OCI-LY7 (cell line): ENCODE measurements at regions of chr12 and their contacts with region 1.

Region 1: DNA sequence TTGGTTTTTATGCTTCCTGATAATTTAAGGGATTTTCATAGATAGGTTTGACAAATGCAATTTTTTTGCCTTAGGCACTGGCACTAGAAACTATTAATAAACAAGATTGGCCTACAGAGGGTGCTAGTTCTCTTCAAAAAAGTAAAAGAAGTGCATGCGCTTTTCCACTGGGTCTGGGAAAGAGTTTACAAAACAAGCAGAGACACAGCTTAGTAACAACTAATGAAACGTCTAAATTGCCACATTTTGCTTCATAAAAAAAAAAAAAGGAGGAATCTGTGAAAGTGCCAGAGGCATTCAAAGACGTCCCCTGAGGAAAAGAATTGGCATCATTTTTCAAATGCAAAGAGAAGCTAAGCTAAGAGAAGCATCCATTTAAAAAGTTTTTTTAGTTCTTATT is 58.3 kb upstream of the EEA1 start:
- DNase-seq: peak; percentile 79
- H3K4me3 ChIP-seq: peak overlapping the region; percentile 54
- H3K27ac ChIP-seq: peak overlapping the region; percentile 88
- H3K4me1 ChIP-seq: peaks cover 45% of the 10 kb centered on the region
- CTCF ChIP-seq: peak; percentile 92

Region 2: GRCh38 chr12:92784795-92785562 is 202.4 kb before region 1 on chr12:
- CTCF ChIA-PET with region 1: no interaction called
- POLR2A ChIA-PET with region 1: interaction called, 4 read pairs
- intact Hi-C with region 1: loop called (anchors 1 kb)
- DNase-seq: peak; percentile 79
- H3K4me3 ChIP-seq: no peak overlapping the region
- H3K27ac ChIP-seq: no peak overlapping the region
- H3K4me1 ChIP-seq: no peaks in the 10 kb centered on the region
- CTCF ChIP-seq: peak; percentile 84

Region 3: DNA sequence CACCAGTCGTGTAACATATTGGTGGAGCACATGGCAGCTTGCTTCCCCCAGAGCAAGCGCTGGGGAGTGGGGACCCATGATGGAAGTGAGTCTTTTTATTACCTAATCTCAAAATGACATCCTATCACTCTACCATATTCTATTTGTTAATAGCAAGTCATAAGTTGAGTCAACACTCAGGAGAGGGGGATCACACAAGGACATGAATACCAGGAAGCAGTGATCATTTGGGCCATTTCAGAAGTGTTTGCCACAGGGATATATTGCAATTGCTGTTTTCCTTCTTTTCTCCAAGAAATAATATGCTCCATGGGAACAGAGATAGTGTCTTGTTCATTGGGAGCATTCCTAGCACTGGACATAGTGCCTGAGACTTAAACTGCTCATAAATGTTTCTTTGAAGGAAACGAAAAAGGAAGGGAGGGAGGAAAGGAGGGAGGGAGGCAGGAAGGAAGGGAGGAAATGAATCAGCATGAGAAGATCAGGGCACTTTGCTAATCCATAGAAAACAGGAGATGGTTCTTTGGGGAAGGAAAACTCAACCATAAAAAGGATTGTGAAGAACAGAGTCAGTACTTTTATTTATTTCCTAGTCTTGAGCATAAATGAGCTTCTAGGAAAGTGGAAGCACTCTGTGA is 19.1 kb before region 1 on chr12:
- CTCF ChIA-PET with region 1: no interaction called
- POLR2A ChIA-PET with region 1: no interaction called
- intact Hi-C with region 1: no loop called
- DNase-seq: no peak
- H3K4me3 ChIP-seq: no peak overlapping the region
- H3K27ac ChIP-seq: no peak overlapping the region
- H3K4me1 ChIP-seq: no peaks in the 10 kb centered on the region
- CTCF ChIP-seq: no peak

Region 4: DNA sequence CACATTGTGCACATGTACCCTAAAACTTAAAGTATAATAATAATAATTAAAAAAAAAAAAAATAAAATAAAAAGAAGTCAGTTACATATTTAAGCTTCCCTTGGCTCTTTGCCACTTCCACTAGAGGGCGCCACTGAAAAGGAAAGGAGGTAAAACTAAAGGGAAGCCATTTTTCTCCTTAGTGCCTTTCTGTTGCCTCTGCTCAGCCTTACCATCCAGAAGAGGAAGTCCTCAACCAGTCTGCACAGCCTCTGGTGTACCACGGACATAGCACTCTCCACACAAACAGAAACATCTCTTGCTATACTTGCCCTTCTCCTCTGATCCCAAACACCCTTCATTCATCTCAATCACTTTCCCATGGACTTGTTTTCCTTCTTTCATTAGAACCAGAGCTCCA is 110.7 kb after region 1 on chr12:
- CTCF ChIA-PET with region 1: interaction called, 4 read pairs
- POLR2A ChIA-PET with region 1: interaction called, 15 read pairs
- intact Hi-C with region 1: loop called (anchors 1 kb)
- DNase-seq: peak; percentile 87
- H3K4me3 ChIP-seq: no peak overlapping the region
- H3K27ac ChIP-seq: no peak overlapping the region
- H3K4me1 ChIP-seq: peaks cover 7% of the 10 kb centered on the region
- CTCF ChIP-seq: peak; percentile 86

Region 5: GRCh38 chr12:93205361-93205760 is 218.0 kb after region 1 on chr12:
- CTCF ChIA-PET with region 1: no interaction called
- POLR2A ChIA-PET with region 1: no interaction called
- intact Hi-C with region 1: no loop called
- DNase-seq: no peak
- H3K4me3 ChIP-seq: no peak overlapping the region
- H3K27ac ChIP-seq: no peak overlapping the region
- H3K4me1 ChIP-seq: no peaks in the 10 kb centered on the region
- CTCF ChIP-seq: no peak

Region 6: GRCh38 chr12:93378373-93379325 is 391.3 kb after region 1 on chr12:
- CTCF ChIA-PET with region 1: no interaction called
- POLR2A ChIA-PET with region 1: interaction called, 24 read pairs
- intact Hi-C with region 1: loop called (anchors 1 kb)
- DNase-seq: peak; percentile 80
- H3K4me3 ChIP-seq: peak overlapping the region; percentile 75
- H3K27ac ChIP-seq: peak overlapping the region; percentile 71
- H3K4me1 ChIP-seq: peaks cover 23% of the 10 kb centered on the region
- CTCF ChIP-seq: no peak

Region 7: DNA sequence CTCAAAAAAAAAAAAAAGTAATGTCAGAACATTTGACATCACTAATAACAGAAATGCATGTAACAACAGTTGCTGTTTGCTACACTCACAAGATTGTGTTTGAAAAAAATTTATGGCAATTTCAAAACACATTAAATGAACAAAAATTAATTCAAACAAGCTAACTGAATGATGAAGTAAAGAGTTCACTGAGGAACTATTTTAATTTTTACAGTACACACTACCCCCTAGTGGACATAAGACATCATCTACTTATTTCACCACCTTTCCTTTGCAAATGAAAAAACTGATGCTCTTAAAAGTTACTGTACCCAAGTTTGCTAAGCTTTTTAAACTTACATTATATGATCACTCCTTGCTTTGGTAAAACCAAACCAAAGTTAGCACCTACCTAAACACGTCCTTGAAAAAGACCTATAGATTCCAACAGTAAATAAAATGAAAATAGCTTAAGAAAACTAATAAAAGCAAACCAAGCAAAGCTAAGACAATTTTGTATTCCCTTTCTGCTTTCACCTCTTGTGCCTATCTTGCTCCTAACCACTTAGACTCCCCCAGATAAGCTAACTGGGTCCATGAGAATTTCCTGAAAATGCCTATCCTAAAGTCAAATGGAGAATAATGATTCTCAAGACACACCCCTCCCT is 432.1 kb after region 1 on chr12:
- CTCF ChIA-PET with region 1: no interaction called
- POLR2A ChIA-PET with region 1: interaction called, 5 read pairs
- intact Hi-C with region 1: loop called (anchors 1 kb)
- DNase-seq: peak; percentile 70
- H3K4me3 ChIP-seq: no peak overlapping the region
- H3K27ac ChIP-seq: no peak overlapping the region
- H3K4me1 ChIP-seq: peaks cover 85% of the 10 kb centered on the region
- CTCF ChIP-seq: peak; percentile 85

Region 8: DNA sequence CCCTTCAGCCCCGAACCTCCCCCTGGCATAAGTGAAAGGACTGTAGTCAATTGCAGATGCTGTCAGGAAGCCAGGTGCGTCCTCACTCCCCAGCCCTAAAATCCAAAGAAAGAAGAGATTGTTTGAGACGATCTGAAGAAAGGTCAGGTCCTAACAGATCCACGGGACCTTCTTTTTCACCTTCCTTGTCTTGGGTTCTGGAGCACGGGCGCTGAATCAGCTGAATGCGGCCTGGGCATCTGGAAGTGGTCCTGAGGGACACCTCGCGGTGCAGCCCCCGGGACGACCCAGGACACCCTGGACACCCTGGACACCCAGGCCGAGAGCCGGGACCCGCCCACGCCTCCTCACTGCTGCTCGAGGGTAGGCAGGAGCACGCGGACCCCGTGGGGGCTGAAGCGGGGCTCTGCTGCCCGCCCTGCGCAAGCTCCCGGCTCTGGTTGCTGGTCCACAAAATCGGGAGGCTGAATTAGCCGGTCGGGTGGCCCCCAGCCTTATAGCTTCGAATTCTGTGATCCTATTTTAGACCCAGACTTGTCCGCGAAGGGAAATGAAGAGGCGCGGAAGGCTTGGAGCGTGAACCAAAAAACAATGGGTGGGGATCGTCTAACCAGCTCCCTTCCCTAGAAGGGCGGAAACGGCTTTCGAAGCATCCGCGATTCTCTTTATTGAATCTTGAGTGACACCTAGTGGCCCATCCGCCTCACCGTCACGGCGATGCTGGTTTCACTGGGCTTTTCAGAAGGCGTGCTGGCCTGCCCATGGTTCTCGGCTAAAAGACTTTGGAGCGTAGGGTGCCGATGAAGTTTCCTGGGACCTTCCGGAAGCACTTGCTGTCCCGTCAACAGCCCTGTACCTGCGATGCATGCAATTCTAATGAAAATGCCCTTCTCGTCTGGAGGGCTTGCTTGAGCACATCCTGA is 1114.6 kb after region 1 on chr12:
- CTCF ChIA-PET with region 1: no interaction called
- POLR2A ChIA-PET with region 1: no interaction called
- intact Hi-C with region 1: loop called (anchors 5 kb)
- DNase-seq: peak; percentile 89
- H3K4me3 ChIP-seq: no peak overlapping the region
- H3K27ac ChIP-seq: no peak overlapping the region
- H3K4me1 ChIP-seq: peaks cover 3% of the 10 kb centered on the region
- CTCF ChIP-seq: peak; percentile 87